ENCODE measurements at regions of chrX and their contacts with region 1.

Region 1: GRCh38 chrX:7132335-7133049 is 15.0 kb upstream of the STS start:
- DNase-seq: peak; percentile 96
- ATAC-seq: peak; percentile 96
- H3K4me3 ChIP-seq: no peak overlapping the region; the same call in 1 of the 2 replicates
- H3K27ac ChIP-seq: peak overlapping the region; percentile 96
- H3K4me1 ChIP-seq: peaks cover 26% of the 10 kb centered on the region
- H3K27me3 ChIP-seq: no peaks in the 10 kb centered on the region
- CTCF ChIP-seq: peak; percentile 77

Region 2: GRCh38 chrX:7110821-7111276 is 21.6 kb before region 1 on chrX:
- CTCF ChIA-PET with region 1: no interaction called
- POLR2A ChIA-PET with region 1: no interaction called
- intact Hi-C with region 1: no loop called
- DNase-seq: peak; percentile 52
- ATAC-seq: peak; percentile 27; the same call in 1 of the 2 replicates
- H3K4me3 ChIP-seq: no peak overlapping the region
- H3K27ac ChIP-seq: peak overlapping the region; percentile 59
- H3K4me1 ChIP-seq: peaks cover 15% of the 10 kb centered on the region
- H3K27me3 ChIP-seq: no peaks in the 10 kb centered on the region
- CTCF ChIP-seq: no peak

Region 3: DNA sequence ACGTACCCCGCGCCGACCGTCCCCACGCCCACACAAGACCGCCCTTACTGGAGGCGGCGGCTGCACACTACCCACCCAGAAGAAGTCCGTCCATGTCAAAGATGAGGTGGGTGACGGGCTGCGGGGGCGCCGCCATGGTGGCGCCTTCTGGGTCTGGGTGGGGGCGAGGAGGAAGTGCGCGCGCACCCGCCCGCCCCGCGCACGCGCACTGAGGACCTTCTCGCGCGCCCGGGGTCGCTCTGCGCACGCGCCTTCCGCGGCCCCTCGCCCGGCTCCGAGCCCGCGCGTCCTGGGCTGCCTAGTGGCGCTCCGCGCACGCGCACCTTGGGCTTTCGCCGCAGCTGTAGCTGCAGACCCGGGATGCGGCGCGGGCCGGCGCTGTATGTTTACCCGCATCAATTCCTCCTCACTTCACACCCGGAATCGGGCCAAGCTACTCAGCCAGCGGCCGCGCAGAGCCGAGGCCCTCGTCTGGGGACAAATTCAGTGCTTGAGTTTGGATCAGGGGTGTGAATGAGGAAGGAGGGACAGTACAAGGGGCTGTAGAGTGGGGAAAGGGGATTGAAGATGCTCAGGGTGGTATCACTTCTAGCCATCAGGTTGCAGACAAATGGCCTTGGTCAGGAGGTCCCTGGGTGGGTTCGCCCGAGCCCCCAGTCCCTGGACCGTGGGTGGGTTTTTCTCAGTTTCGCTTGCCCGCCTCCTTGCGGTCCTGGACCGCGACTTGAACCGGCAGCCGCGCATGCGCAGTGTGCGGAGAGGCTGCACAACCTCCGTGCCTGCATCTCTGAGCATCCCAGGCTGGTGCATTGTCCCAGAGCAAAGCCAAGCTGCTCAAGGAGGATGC is 15.7 kb after region 1 on chrX and contains the start of gene PUDP:
- CTCF ChIA-PET with region 1: no interaction called
- POLR2A ChIA-PET with region 1: no interaction called
- intact Hi-C with region 1: loop called (anchors 1 kb)
- DNase-seq: peak; percentile 84
- ATAC-seq: peak; percentile 78
- H3K4me3 ChIP-seq: peak within 1 kb of the TSS; percentile 96
- H3K27ac ChIP-seq: peak within 1 kb of the TSS; percentile 68
- H3K4me1 ChIP-seq: peaks cover 30% of the 10 kb centered on the region
- H3K27me3 ChIP-seq: no peaks in the 10 kb centered on the region
- CTCF ChIP-seq: peak; percentile 26; the same call in 1 of the 2 replicates
- total RNA-seq, gene PUDP: 7.6 and 7.8 TPM in 2 replicates

Region 4: DNA sequence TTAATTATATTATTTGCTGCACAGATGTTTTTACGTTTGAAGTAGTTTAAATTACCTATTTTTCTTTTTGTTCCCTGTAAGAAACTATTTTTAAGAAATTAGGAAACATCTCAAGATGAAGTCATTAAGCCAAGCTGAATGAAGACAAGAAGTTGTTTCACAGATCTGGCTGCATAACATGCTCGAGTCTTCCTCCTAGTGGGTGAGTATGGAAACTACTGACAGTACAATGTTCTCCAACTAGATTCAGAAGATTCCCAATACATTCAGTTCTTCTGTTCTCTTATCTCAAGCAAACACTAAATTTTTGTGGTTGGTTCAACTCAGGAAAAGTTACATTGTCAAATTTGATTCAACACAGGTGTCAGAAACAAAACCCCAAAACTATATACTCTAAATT is 453.6 kb after region 1 on chrX:
- CTCF ChIA-PET with region 1: no interaction called
- POLR2A ChIA-PET with region 1: no interaction called
- intact Hi-C with region 1: loop called (anchors 1 kb)
- DNase-seq: peak; percentile 53
- ATAC-seq: no peak
- H3K4me3 ChIP-seq: no peak overlapping the region
- H3K27ac ChIP-seq: no peak overlapping the region
- H3K4me1 ChIP-seq: no peaks in the 10 kb centered on the region
- H3K27me3 ChIP-seq: no peaks in the 10 kb centered on the region
- CTCF ChIP-seq: peak; percentile 60

Region 5: DNA sequence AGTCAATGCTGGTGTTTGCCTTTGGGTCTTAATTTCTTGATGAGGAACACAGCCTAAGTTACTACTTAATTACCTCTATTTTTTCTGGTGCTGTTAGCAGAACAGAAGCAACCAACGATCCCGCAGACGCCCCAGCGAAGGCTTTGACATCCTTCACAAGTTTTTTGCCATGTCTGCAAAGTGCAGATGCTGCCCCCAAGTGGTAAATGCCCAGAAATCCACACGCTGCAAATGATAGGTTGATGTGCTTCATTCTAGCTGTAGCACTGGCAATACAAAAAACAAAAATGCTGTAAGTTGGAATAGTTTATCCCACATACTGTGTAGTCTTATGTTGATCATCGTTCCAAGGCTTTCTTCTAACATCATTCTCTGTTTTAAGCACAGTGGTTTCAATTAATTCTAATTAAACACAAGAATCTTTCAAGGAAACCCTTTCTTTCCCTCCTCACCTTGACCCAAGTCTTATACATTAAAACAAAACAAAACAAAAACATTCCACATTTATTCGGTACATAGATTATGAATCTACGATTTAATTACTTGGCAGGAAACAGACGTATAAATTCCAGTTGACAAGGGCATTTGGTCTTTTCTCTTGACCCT is 793.5 kb after region 1 on chrX:
- CTCF ChIA-PET with region 1: no interaction called
- POLR2A ChIA-PET with region 1: no interaction called
- intact Hi-C with region 1: loop called (anchors 10 kb)
- DNase-seq: peak; percentile 76
- ATAC-seq: peak; percentile 35; the same call in 1 of the 2 replicates
- H3K4me3 ChIP-seq: peak overlapping the region; percentile 74
- H3K27ac ChIP-seq: no peak overlapping the region
- H3K4me1 ChIP-seq: peaks cover 17% of the 10 kb centered on the region
- H3K27me3 ChIP-seq: no peaks in the 10 kb centered on the region
- CTCF ChIP-seq: peak; percentile 82

Measured in PC-3 (cell line).